ENCODE measurements at regions of chr18 and their contacts with region 1.

Region 1: GRCh38 chr18:59996370-59996966 is 96.7 kb downstream of the PMAIP1 start:
- DNase-seq: peak; percentile 58
- H3K4me3 ChIP-seq: no peak overlapping the region; a peak in 1 of 4 replicates
- H3K27ac ChIP-seq: no peak overlapping the region
- H3K4me1 ChIP-seq: no peaks in the 10 kb centered on the region
- H3K27me3 ChIP-seq: no peaks in the 10 kb centered on the region
- CTCF ChIP-seq: peak; percentile 95
- EP300 ChIP-seq: no peak
- RAD21 ChIP-seq: peak; percentile 90

Region 2: DNA sequence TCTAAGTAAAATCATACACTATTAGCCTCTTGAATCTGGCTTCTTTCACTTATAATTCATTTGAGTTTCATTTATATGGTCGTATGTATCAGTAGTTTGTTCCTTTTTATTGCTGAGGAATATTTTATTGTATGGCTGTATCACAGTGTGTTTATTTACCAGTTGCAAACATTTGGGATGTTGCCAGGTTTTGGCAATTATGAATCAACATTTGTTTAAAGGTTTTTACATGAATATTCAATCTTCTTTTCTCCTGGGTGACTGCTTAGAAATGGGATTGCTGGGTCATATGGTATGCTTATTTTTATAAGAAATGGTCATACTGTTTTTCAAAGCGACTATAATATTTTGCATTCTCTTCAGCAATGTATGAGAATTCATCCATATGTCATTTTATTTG is 11.2 kb after region 1 on chr18:
- CTCF ChIA-PET with region 1: interaction called, 10 read pairs
- POLR2A ChIA-PET with region 1: no interaction called
- DNase-seq: no peak
- H3K4me3 ChIP-seq: no peak overlapping the region
- H3K27ac ChIP-seq: peak overlapping the region in 1 of 2 experiments; percentile 26; a peak in 1 of 4 replicates
- H3K4me1 ChIP-seq: no peaks in the 10 kb centered on the region; a peak in 1 of 4 replicates
- H3K27me3 ChIP-seq: no peaks in the 10 kb centered on the region
- CTCF ChIP-seq: no peak
- EP300 ChIP-seq: no peak
- RAD21 ChIP-seq: no peak

Region 3: DNA sequence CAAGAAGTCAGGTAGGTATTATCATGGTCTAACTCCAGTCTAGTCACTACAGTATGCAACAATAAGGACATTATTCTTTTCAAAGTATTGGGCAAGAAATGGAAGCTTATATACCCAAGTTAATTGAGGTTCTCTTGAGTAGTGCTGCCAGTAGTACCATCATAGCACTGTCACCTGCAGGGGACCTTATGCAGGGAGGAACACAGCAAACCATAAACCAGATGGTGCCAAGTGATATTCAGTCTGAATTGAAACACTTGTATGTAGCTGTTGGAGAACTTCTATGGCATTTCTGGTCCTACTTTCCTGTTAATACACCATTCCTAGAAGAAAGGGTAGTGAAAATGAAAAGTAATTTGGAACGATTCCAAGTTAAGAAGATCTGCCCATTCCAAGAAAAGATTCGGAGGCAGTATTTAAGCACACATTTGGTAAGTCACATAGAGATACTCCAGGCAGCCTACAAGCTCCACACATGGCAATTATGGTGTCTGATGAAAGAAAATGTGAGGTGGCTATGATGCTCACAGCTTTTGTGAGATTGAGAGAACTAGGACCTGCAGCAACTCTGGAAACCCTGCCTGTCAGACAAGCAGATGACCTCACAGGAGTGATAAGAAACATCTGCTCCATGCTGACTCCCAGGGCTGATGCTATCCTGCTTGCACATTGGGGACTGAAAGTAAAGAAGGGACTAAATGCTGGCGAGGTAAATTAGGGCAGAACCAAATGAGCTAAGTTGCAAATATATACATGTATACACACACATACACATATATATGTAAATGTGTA is 201.4 kb after region 1 on chr18:
- CTCF ChIA-PET with region 1: interaction called, 12 read pairs
- POLR2A ChIA-PET with region 1: no interaction called
- DNase-seq: peak; percentile 60
- H3K4me3 ChIP-seq: no peak overlapping the region
- H3K27ac ChIP-seq: peak overlapping the region; percentile 46 to 99; a peak in 3 of 4 replicates
- H3K4me1 ChIP-seq: peaks cover 18 to 43% of the 10 kb centered on the region in 2 experiments
- H3K27me3 ChIP-seq: no peaks in the 10 kb centered on the region
- CTCF ChIP-seq: no peak
- EP300 ChIP-seq: peak; percentile 45 to 93; a peak in 3 of 4 replicates
- RAD21 ChIP-seq: peak; percentile 37

Region 4: DNA sequence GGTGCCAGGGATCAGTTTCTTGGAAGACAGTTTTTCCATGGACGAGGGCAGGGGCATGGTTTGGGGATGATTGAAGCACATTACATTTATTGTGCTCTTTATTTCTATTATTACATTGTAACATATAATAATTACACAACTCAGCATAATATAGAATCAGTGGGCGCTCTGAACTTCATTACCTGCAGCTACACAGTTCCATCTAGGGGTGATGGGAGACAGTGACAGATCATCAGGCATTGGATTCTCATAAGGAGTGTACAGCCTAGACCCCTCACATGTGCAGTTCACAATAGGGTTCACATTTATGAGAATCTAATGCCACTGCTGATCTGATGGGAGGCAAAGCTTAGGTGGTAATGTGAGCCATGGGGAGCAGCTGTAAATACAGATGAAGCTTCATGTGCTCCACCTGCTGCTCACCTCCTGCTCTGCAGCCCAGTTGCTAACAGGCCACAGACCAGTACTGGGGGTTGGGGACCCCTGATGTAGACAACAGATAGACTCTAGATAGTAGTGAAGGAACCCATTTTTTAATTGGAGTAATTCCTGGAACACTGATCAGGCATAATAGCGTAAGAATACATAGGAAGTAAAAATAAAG is 417.6 kb after region 1 on chr18:
- CTCF ChIA-PET with region 1: interaction called, 11 read pairs
- POLR2A ChIA-PET with region 1: no interaction called
- DNase-seq: no peak
- H3K4me3 ChIP-seq: peak overlapping the region in 1 of 2 experiments; percentile 15; a peak in 1 of 4 replicates
- H3K27ac ChIP-seq: no peak overlapping the region
- H3K4me1 ChIP-seq: no peaks in the 10 kb centered on the region; a peak in 2 of 4 replicates
- H3K27me3 ChIP-seq: no peaks in the 10 kb centered on the region
- CTCF ChIP-seq: peak; percentile 55
- EP300 ChIP-seq: no peak
- RAD21 ChIP-seq: peak; percentile 49; the same call in 1 of the 2 replicates

Region 5: DNA sequence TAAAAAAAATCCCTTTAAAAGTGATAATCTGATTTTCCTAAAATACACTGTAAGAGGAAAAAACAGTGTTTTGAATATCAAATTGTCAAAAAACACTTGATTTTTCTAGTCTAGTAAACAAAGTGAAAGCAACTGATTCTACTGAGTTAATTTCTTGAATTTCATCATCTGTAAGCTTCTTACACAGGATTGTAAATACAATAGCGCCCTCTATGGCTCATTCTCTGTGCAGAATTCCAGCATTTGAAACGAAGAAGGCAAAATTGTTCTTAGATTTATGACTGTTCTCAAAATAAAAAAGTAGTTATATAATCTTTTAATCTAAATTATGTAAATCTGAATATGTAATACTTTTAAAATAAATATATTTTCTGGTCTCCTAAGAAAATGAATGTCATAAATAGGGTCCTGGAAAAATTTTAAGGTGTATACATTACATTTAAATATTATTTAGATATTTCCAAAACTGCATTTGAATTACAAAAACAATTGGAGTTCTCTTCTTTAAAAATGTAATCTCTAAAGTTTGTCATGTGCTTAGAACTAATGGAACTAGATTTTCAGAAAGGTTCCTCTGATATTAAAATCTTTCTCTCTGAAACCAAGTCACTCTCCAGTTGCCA is 553.0 kb after region 1 on chr18:
- CTCF ChIA-PET with region 1: interaction called, 110 read pairs
- POLR2A ChIA-PET with region 1: no interaction called
- DNase-seq: peak; percentile 43
- H3K4me3 ChIP-seq: no peak overlapping the region; a peak in 1 of 4 replicates
- H3K27ac ChIP-seq: no peak overlapping the region; a peak in 1 of 4 replicates
- H3K4me1 ChIP-seq: no peaks in the 10 kb centered on the region
- H3K27me3 ChIP-seq: no peaks in the 10 kb centered on the region
- CTCF ChIP-seq: peak; percentile 95
- EP300 ChIP-seq: no peak
- RAD21 ChIP-seq: peak; percentile 99

Measured in SK-N-SH (cell line).